ENCODE measurements at regions of chr7 and their contacts with region 1.

Region 1: DNA sequence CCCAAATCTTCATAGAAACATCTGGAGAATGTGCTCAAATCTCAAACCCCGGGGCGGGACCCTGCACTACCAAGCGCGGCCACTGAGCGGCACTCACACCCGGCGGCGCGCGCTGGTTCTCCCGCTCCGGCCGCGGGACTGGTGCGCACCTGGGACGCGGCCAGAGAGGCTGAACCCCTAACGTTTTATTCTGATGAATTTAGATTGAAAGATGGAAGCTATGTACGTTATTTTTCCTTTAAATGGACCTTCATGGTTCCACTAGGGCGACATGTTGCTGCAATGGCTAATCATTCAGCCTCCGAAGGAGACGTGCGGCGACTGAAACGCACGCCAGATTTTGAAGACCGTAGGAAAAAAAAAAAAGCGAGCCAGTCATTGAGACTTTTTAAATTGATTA is 107.0 kb upstream of the INSIG1 start:
- DNase-seq: peak; percentile 82
- ATAC-seq: peak; percentile 64
- H3K4me3 Mint-ChIP-seq: no peak overlapping the region
- H3K27ac Mint-ChIP-seq: no peak overlapping the region
- H3K4me1 Mint-ChIP-seq: peaks cover 35% of the 10 kb centered on the region
- H3K27me3 Mint-ChIP-seq: peaks cover 5% of the 10 kb centered on the region

Region 2: DNA sequence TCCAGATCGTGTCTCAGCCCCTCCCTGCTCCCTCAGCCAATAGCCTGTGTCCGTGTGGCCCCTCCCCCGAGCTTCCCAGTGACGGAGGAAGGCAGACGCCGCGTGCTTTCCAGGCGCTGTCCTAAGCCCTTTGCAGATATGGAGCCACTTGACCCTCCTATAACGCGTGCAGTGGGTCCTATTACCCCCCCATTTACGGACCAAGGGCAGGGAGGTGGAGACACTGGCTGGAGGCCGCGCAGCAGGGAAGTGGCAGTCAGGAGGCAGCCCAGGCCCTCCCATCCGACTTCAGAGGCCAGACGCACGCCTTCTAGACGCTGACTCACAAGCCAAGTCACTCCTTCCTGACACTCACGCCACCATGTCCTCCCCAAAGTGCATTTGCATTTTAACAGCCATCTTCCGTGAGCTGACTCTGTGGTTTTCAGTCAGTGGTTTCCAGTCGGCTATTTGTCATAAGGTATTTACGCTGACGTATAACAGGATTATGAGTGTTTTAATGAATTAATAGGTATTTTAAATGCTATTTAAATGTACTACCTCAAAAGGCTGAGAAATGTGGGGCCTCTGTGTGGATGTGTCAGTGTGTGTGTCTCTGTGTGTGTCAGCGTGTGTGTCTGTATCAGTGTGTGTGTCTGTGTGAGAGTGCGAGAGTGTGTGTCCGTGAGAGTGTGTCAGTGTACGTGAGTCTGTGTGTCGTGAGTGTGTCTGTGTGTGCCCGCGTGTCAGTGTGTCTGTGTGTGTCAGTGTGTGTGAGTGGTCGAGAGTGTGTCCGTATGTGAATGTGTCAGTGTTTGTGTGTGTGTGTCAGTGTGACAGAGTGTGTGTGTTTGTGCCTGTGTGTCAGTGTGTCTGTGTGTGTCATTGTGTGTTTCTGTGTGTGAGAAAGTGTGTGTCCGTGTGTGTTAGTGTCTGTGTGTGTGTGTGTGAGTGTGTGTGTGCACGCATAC is 15.0 kb after region 1 on chr7:
- CTCF ChIA-PET with region 1: interaction called, 16 read pairs
- POLR2A ChIA-PET with region 1: no interaction called
- intact Hi-C with region 1: loop called in 1 of 2 experiments (anchors 1 kb)
- DNase-seq: peak; percentile 95
- ATAC-seq: peak; percentile 84
- H3K4me3 Mint-ChIP-seq: peak overlapping the region; percentile 77
- H3K27ac Mint-ChIP-seq: peak overlapping the region; percentile 100
- H3K4me1 Mint-ChIP-seq: peaks cover 60% of the 10 kb centered on the region
- H3K27me3 Mint-ChIP-seq: no peaks in the 10 kb centered on the region

Region 3: GRCh38 chr7:155251570-155252222 is 61.0 kb after region 1 on chr7:
- CTCF ChIA-PET with region 1: no interaction called
- POLR2A ChIA-PET with region 1: no interaction called
- intact Hi-C with region 1: loop called in 1 of 2 experiments (anchors 2 kb)
- DNase-seq: no peak
- ATAC-seq: no peak
- H3K4me3 Mint-ChIP-seq: no peak overlapping the region
- H3K27ac Mint-ChIP-seq: no peak overlapping the region
- H3K4me1 Mint-ChIP-seq: peaks cover 12% of the 10 kb centered on the region
- H3K27me3 Mint-ChIP-seq: peaks cover 8% of the 10 kb centered on the region